Activated CD8-positive, alpha-beta memory T cell treated with anti-CD3 and anti-CD28 coated beads, Interleukin-2, amount 10 ng/mL, durations not matched to agents 7 days and 5 days (primary cell): ENCODE measurements at regions of chr9 and their contacts with region 1.

Region 1: GRCh38 chr9:125631391-125632085 is 75.5 kb downstream of the MAPKAP1 start:
- DNase-seq: peak; percentile 49
- ATAC-seq: peak; percentile 54
- H3K4me3 Mint-ChIP-seq: no peak overlapping the region
- H3K27ac Mint-ChIP-seq: peak overlapping the region; percentile 1
- H3K4me1 Mint-ChIP-seq: peaks cover 57% of the 10 kb centered on the region
- H3K27me3 Mint-ChIP-seq: no peaks in the 10 kb centered on the region

Region 2: GRCh38 chr9:125558453-125559092 is 73.0 kb before region 1 on chr9:
- CTCF ChIA-PET with region 1: interaction called, 10 read pairs
- DNase-seq: peak; percentile 68
- ATAC-seq: peak; percentile 72
- H3K4me3 Mint-ChIP-seq: no peak overlapping the region
- H3K27ac Mint-ChIP-seq: no peak overlapping the region
- H3K4me1 Mint-ChIP-seq: peaks cover 20% of the 10 kb centered on the region
- H3K27me3 Mint-ChIP-seq: no peaks in the 10 kb centered on the region

Region 3: GRCh38 chr9:125758986-125759763 is 127.6 kb after region 1 on chr9:
- CTCF ChIA-PET with region 1: no interaction called
- DNase-seq: no peak
- ATAC-seq: no peak
- H3K4me3 Mint-ChIP-seq: no peak overlapping the region
- H3K27ac Mint-ChIP-seq: no peak overlapping the region
- H3K4me1 Mint-ChIP-seq: peaks cover 8% of the 10 kb centered on the region
- H3K27me3 Mint-ChIP-seq: no peaks in the 10 kb centered on the region